ENCODE measurements at regions of chr9 and their contacts with region 1.

Region 1: GRCh38 chr9:14322211-14323082 is 8.5 kb upstream of the NFIB start:
- DNase-seq: peak; percentile 85 to 93
- H3K4me3 ChIP-seq: peak overlapping the region; percentile 44
- H3K4me1 ChIP-seq: peaks cover 50% of the 10 kb centered on the region
- H3K27me3 ChIP-seq: no peaks in the 10 kb centered on the region

Region 2: GRCh38 chr9:14133394-14133793 is 189.1 kb before region 1 on chr9:
- in situ Hi-C with region 1: loop called (anchors 25 kb)
- DNase-seq: no peak
- H3K4me3 ChIP-seq: no peak overlapping the region
- H3K4me1 ChIP-seq: peaks cover 23% of the 10 kb centered on the region
- H3K27me3 ChIP-seq: no peaks in the 10 kb centered on the region

Region 3: GRCh38 chr9:14849296-14849695 is 526.8 kb after region 1 on chr9:
- in situ Hi-C with region 1: no loop called
- DNase-seq: no peak
- H3K4me3 ChIP-seq: no peak overlapping the region
- H3K4me1 ChIP-seq: no peaks in the 10 kb centered on the region
- H3K27me3 ChIP-seq: peaks cover 21% of the 10 kb centered on the region

Measured in HAP-1 (cell line).